Endothelial cell of umbilical vein (primary cell): ENCODE measurements at regions of chr17 and their contacts with region 1.

Region 1: GRCh38 chr17:4143563-4144421 is 795 bp downstream of the CYB5D2 start:
- DNase-seq: peak; percentile 94
- H3K4me3 ChIP-seq: peak overlapping the region; percentile 49 to 87 (median 75)
- H3K27ac ChIP-seq: peak overlapping the region; percentile 90
- H3K4me1 ChIP-seq: peaks cover 15% of the 10 kb centered on the region
- H3K27me3 ChIP-seq: no peaks in the 10 kb centered on the region
- CTCF ChIP-seq: no peak
- POLR2A ChIP-seq: peak; percentile 94

Region 2: DNA sequence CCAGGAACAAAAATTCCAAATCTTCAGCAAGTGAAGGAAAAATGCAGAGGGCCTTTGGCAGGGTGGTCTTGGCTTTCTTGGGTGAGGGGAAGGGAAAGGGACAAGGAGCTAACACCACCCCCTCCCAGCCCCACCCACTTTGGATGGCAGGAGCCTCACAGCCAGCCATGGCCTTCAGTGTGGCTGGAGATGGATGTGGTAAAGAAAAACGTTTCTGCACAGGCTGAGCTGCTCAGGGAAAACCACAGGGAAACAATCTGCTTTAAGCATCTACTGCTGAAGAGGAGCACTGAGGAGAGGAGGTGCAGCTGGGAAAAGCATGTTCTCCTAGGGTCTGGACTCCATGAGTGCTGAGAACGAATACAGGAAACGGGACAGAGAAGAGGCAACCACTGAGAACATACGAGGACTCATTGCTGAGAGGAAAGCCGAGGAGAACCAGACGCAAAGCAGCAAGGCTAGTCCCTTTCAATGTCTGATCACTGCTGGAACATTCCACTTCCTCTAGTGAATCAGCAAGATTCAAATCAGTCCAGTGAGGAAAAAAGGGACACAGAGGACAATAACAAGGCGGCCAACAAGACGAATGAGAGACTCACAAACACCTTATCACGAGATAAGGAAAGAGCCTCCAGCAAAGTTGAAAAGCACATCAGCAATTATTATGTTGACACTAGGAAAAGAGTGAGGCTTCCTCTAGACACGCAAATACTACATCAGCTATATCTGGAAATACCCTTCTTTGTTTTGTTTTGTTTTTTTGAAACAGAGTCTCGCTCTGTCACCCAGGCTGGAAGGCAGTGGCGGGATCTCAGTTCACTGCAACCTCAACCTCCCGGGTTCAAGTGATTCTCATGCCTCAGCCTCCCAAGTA is 42.7 kb before region 1 on chr17:
- CTCF ChIA-PET with region 1: no interaction called
- POLR2A ChIA-PET with region 1: interaction called, 6 read pairs
- dilution Hi-C with region 1: no loop called
- intact Hi-C with region 1: loop called (anchors 2 kb)
- DNase-seq: peak; percentile 91
- H3K4me3 ChIP-seq: no peak overlapping the region
- H3K27ac ChIP-seq: peak overlapping the region; percentile 83
- H3K4me1 ChIP-seq: peaks cover 47% of the 10 kb centered on the region
- H3K27me3 ChIP-seq: no peaks in the 10 kb centered on the region
- CTCF ChIP-seq: no peak
- POLR2A ChIP-seq: peak; percentile 36